HEK293 (cell line): ENCODE measurements at regions of chr9 and their contacts with region 1.

Region 1: DNA sequence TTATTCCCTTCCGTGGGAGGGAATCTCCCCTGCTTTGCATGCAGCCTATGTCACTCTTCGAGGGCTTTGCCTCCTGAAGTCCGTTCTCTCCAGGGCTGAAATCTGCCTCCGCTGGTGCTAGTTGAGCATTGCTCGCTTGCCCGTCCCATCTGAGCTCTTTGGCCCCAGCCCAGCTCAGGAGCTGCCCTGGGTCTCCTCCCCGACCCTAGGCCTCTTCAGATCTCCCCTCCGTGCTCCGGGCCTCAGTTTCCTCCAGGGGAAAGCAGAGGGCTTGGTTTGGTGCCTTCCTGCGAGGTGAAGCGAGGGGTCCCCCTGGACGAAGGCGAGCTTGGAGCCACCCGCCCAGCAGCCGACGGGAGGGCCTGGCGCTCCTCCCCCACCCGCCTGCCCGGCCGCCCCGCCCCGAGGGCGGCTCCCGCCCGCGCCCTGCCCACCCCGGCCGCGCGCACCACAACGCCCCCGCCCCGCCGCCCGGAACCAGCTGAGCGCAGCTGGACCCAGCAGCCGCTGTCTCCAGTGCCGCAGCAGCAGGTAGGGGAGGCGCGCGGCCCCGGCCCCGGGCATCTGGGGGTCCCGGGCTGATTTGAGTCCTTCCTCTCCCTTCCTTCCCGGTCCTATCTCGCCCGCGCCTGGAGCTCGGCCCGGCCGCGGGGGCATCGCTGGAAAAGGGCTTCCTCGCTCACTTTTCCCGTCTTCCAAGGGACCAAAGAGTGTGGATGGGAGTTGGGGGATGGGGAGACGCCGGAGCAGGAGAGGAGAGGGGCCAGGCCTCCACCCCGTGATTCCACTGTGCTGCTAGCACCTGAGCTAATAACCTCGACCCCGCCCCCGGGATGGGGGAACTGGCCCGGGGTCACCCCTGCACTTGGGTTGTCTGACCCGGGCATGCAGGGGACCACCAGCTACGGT is at the start of gene GSN:
- H3K4me3 ChIP-seq: peak within 1 kb of the TSS; percentile 66
- H3K27ac ChIP-seq: no peak within 1 kb of the TSS
- H3K4me1 ChIP-seq: peaks cover 2% of the 10 kb centered on the region; the same call in 1 of the 2 replicates
- CTCF ChIP-seq: no peak

Region 2: DNA sequence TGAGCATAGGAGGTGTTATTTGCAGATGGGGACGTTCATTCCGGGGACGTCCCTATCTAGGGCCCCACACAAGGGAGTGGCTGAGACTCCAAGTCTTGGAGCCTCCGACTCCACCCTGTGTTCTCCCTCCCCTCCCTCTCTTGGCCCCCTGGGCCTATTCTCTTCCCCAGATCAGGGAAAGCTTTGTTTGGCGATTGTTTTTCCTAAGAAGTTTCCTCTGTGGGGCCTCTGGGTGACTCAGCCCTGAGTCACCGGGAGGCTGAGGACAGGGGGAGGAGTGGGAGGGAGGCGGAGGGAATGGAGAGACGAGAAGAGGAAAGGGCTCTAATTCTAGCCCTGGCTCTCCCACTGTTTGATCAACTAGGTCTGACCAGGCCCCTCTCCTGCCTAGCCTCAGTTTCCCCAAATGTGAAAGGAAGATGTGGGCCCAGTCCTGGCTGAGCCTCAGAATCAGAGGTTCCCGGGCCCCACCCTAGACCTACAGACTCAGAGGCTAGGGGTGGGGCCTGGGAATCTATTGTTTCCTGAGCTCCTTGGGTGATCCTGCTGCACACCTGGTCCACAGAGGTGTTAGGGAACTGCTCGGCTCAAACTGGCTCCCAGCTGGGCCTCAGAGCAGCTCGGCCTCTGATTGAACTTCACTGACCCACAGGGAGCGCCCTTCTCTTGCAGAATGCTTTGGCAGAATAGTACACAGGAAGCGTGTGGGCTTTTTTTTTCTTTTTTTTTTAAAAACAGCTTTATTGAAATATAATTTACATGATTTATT is 19.2 kb after region 1 on chr9:
- CTCF ChIA-PET with region 1: interaction called, 3 read pairs
- POLR2A ChIA-PET with region 1: interaction called, 14 read pairs
- H3K4me3 ChIP-seq: peak overlapping the region; percentile 19
- H3K27ac ChIP-seq: peak overlapping the region; percentile 91
- H3K4me1 ChIP-seq: peaks cover 8% of the 10 kb centered on the region; the same call in 1 of the 2 replicates
- CTCF ChIP-seq: peak; percentile 18; the same call in 1 of the 2 replicates